Lower lobe of right lung (tissue), 2 donors: ENCODE measurements at regions of chr2 and their contacts with region 1.

Region 1: GRCh38 chr2:177164584-177165052 is 48.0 kb upstream of the HNRNPA3 start:
- DNase-seq: peak; percentile 81
- ATAC-seq: peak; percentile 93 to 94
- H3K4me3 ChIP-seq: peak overlapping the region; percentile 55
- H3K27ac ChIP-seq: peak overlapping the region; percentile 89
- H3K4me1 ChIP-seq: peaks cover 26% of the 10 kb centered on the region
- H3K27me3 ChIP-seq: no peaks in the 10 kb centered on the region
- CTCF ChIP-seq: peak; percentile 99

Region 2: DNA sequence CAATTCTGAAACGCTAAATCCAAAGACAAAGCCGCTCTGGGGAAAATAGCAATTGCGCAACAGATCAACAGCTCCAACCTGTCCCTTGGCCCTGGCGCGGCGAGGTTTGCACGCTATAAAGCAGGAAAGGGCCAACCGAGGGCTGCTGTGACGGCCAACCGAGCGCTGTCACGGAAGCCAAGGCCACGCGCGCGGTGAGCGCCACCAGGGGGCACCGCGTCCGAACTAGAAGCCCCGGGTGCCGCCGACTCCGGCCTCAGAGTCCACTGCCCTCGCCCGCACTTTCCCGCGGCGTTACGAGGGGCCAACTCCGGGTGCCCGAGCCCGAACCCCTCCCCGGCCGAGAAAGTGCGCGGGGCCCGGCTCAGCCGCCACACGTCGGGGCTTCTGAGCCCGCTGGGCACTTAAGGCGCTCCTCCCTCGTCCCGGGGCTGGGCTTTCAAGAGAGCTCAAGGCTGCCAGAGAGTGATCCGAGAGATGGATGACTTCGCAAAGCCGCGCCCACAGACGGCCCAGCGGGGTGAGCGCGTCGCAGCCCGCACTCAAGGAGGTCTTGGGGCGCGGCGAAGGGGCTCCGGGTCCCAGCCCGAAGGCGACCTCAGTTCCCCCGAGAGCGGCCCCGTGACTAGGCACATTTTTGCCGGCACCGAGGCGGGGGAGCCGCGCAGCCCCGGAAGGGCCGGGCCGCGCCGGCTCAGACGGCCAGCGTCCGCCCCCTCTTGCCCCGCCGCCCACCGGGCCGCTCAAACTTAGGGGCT is 99.0 kb after region 1 on chr2:
- intact Hi-C with region 1: loop called (anchors 10 kb)
- DNase-seq: peak; percentile 99
- ATAC-seq: peak; percentile 85 to 93
- H3K4me3 ChIP-seq: peak overlapping the region; percentile 94
- H3K27ac ChIP-seq: peak overlapping the region; percentile 100
- H3K4me1 ChIP-seq: peaks cover 52% of the 10 kb centered on the region
- H3K27me3 ChIP-seq: no peaks in the 10 kb centered on the region
- CTCF ChIP-seq: peak; percentile 94

Region 3: GRCh38 chr2:177306550-177306949 is 141.9 kb after region 1 on chr2:
- intact Hi-C with region 1: no loop called
- DNase-seq: no peak
- ATAC-seq: no peak
- H3K4me3 ChIP-seq: no peak overlapping the region
- H3K27ac ChIP-seq: no peak overlapping the region
- H3K4me1 ChIP-seq: no peaks in the 10 kb centered on the region
- H3K27me3 ChIP-seq: no peaks in the 10 kb centered on the region
- CTCF ChIP-seq: no peak

Region 4: GRCh38 chr2:177332041-177332991 is 167.7 kb after region 1 on chr2:
- intact Hi-C with region 1: loop called (anchors 5 kb)
- DNase-seq: no peak
- ATAC-seq: peak; percentile 87 to 90
- H3K4me3 ChIP-seq: peak overlapping the region; percentile 11
- H3K27ac ChIP-seq: peak overlapping the region; percentile 32
- H3K4me1 ChIP-seq: peaks cover 7% of the 10 kb centered on the region
- H3K27me3 ChIP-seq: no peaks in the 10 kb centered on the region
- CTCF ChIP-seq: peak; percentile 65